Endothelial cell of umbilical vein (primary cell): ENCODE measurements at regions of chr22 and their contacts with region 1.

Region 1: DNA sequence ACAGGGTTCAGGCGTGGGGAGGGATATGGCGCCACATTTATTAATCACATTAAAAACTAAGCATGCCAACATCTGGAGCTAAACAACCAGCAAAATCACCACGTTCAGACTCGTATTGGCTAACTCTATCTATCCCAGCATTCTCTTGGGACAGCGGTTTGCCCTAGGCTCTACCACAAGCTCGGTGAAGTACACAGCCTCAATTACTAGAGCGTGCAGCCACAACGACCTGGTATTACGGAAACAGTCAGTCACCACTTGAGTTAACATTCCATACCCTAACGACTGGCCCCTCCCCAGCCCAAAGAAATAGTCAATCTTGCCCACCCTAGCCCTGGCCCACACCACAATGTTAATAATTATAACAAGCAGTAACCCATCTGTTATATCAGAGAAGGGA is 32.1 kb downstream of the APOL5 start:
- DNase-seq: no peak
- H3K4me3 ChIP-seq: no peak overlapping the region
- H3K27ac ChIP-seq: no peak overlapping the region
- H3K4me1 ChIP-seq: no peaks in the 10 kb centered on the region
- H3K27me3 ChIP-seq: no peaks in the 10 kb centered on the region
- CTCF ChIP-seq: no peak
- POLR2A ChIP-seq: no peak

Region 2: DNA sequence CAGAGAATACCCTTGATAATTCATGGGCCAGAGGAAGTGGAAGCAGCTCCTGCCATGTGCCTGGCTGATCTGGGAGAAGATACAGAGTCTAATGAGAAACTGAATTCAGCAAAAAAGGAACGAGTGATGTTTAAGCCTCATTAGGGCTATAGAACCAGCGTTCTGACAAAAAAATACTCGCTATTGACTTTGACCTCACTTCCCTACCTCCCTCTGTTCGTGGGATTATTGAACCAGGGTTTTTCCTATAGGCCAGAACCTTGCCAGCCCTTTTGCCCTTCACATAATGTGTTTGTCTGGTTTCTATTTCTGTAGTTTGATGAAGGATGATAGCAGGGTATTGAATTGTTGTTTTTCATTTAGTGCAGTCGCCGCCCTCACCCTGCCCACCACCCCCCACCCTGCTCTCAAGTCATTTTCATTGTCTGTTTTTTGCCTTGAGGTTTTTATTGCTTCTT is 286.4 kb after region 1 on chr22:
- CTCF ChIA-PET with region 1: no interaction called
- POLR2A ChIA-PET with region 1: no interaction called
- dilution Hi-C with region 1: loop called (anchors 10 kb)
- intact Hi-C with region 1: no loop called
- DNase-seq: peak; percentile 38
- H3K4me3 ChIP-seq: no peak overlapping the region
- H3K27ac ChIP-seq: no peak overlapping the region
- H3K4me1 ChIP-seq: peaks cover 2% of the 10 kb centered on the region
- H3K27me3 ChIP-seq: peaks cover 10 to 16% of the 10 kb centered on the region in 2 experiments
- CTCF ChIP-seq: no peak
- POLR2A ChIP-seq: no peak

Region 3: DNA sequence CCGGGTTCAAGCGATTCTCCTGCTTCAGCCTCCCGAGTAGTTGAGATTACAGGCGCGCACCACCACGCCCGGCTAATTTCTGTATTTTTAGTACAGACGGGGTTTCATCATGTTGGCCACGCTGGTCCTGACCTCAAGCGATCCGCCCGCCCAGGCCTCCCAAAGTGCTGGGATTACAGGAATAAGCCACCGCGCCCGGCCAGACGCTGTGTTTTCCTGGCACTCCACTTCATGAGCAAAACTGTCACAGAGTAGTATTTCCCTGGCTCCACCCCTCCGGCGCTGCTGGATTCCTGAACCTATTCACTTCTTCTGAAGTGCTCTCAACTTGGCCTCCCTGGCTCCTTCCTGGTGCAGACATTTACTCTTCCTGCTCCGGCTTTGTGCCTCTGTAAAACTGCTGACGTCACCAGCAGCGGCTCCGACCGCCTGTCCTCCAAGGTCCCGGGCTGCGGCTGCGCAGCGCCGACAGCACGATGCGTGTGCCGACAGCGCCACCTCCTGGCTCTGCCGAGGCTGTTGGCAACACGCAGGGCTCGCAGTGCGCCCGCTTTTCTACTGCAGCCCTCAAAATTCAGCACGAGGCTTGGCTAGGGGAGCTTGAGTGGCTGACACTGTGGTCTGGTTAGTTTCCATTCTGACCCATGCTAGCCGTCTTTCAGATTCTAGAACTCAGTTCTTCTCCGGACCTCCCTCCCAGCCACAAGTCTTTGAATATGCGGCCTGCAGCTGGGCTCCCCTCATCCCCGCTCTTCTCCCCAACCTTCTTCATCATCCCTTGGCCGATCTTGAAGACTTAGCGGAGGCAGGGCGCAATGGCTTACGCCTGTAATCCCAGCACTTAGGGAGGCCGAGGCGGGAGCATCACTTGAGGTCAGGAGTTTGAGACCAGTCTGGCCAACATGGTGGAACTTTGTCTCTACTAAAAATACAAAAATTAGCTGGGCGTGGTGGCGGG is 374.1 kb after region 1 on chr22:
- CTCF ChIA-PET with region 1: interaction called, 4 read pairs
- POLR2A ChIA-PET with region 1: no interaction called
- dilution Hi-C with region 1: no loop called
- intact Hi-C with region 1: loop called (anchors 10 kb)
- DNase-seq: peak; percentile 96
- H3K4me3 ChIP-seq: no peak overlapping the region
- H3K27ac ChIP-seq: peak overlapping the region; percentile 18
- H3K4me1 ChIP-seq: no peaks in the 10 kb centered on the region
- H3K27me3 ChIP-seq: no peaks in the 10 kb centered on the region
- CTCF ChIP-seq: peak; percentile 98 to 99
- POLR2A ChIP-seq: no peak